WTC11 (cell line): ENCODE measurements at regions of chr15 and their contacts with region 1.

Region 1: GRCh38 chr15:75307778-75308391 is 25.2 kb downstream of the GOLGA6D start:
- DNase-seq: peak; percentile 90
- ATAC-seq: peak; percentile 100
- H3K4me3 Mint-ChIP-seq: no peak overlapping the region
- H3K27ac Mint-ChIP-seq: no peak overlapping the region
- H3K4me1 Mint-ChIP-seq: 0 out of 2 replicates have a peak, but pooled peaks cover 4% of the 10 kb centered on the region
- H3K27me3 Mint-ChIP-seq: peaks cover 20% of the 10 kb centered on the region
- CTCF ChIP-seq: peak; percentile 65

Region 2: GRCh38 chr15:74995241-74995778 is 312.6 kb before region 1 on chr15 and contains the start of gene SCAMP5:
- CTCF ChIA-PET with region 1: interaction called, 10 read pairs
- POLR2A ChIA-PET with region 1: no interaction called
- DNase-seq: peak; percentile 99
- ATAC-seq: peak; percentile 88
- H3K4me3 Mint-ChIP-seq: peak within 1 kb of the TSS; percentile 79
- H3K27ac Mint-ChIP-seq: no peak within 1 kb of the TSS
- H3K4me1 Mint-ChIP-seq: peaks cover 20% of the 10 kb centered on the region
- H3K27me3 Mint-ChIP-seq: peaks cover 22% of the 10 kb centered on the region
- CTCF ChIP-seq: no peak
- total RNA-seq, gene SCAMP5: 65.7 to 70.1 TPM (median 67.0 TPM) in 3 replicates

Region 3: DNA sequence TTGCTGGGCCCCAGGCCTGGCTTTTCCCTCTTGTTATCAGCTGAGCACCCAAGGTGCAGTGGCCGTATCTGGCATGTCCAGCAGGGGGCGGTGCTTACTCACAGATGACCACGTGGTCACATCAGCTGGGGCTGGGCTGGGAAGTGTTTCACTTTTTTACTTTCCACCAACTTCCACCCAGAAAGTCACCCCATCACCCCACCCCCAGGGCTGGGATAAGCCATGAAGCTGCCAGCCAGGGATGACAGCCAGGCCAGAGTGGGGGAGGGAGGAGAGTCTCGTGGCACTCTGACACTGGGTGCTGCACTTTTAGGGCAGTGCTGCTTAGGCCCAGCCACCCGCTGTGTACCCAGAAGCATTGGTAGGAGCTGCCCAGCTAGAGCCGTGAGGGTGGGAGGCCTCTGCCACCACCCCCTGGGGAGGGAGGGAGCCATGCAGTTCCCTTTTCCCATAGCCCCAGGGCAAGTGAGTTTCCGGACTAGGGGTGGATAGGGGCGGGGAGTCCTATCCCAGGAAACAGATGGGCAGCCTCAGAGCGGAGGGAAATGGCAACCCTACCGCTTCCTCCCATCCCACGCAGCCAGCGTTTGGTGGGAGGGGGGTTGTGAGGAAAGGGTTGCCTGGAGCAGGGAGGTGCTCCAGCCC is 278.4 kb before region 1 on chr15:
- CTCF ChIA-PET with region 1: interaction called, 25 read pairs
- POLR2A ChIA-PET with region 1: no interaction called
- DNase-seq: peak; percentile 94
- ATAC-seq: peak; percentile 84
- H3K4me3 Mint-ChIP-seq: no peak overlapping the region
- H3K27ac Mint-ChIP-seq: peak overlapping the region; percentile 90; the same call in 1 of the 2 replicates
- H3K4me1 Mint-ChIP-seq: peaks cover 52% of the 10 kb centered on the region
- H3K27me3 Mint-ChIP-seq: no peaks in the 10 kb centered on the region
- CTCF ChIP-seq: peak; percentile 94

Region 4: DNA sequence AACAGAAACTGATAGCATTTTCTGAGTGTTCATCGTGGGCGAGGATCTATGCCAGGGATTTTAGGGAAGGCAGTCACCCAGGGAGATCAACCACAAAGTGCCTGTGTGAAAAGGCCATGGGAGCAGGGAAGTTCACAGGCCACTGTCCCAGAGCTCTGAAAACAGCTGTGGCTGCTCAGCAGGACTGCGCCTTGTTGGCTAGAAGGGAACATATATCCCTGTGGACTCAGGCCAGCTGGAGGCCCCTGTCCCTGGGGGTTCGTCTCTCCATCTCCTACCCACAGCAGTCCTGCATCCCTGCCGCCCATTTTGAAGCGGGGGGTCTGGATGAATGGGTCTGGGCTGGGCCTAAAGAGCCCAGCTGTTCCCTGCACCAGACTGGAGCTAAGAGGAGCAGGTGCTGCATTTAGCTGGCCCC is 256.7 kb before region 1 on chr15:
- CTCF ChIA-PET with region 1: no interaction called
- POLR2A ChIA-PET with region 1: no interaction called
- DNase-seq: no peak
- ATAC-seq: no peak
- H3K4me3 Mint-ChIP-seq: no peak overlapping the region
- H3K27ac Mint-ChIP-seq: no peak overlapping the region
- H3K4me1 Mint-ChIP-seq: peaks cover 5% of the 10 kb centered on the region; the same call in 1 of the 2 replicates
- H3K27me3 Mint-ChIP-seq: no peaks in the 10 kb centered on the region
- CTCF ChIP-seq: no peak

Region 5: GRCh38 chr15:75201609-75202250 is 106.2 kb before region 1 on chr15 and contains the start of gene C15orf39:
- CTCF ChIA-PET with region 1: interaction called, 23 read pairs
- POLR2A ChIA-PET with region 1: no interaction called
- DNase-seq: peak; percentile 72
- ATAC-seq: peak; percentile 37
- H3K4me3 Mint-ChIP-seq: peak within 1 kb of the TSS; percentile 91
- H3K27ac Mint-ChIP-seq: peak within 1 kb of the TSS; percentile 89
- H3K4me1 Mint-ChIP-seq: peaks cover 55% of the 10 kb centered on the region
- H3K27me3 Mint-ChIP-seq: 0 out of 2 replicates have a peak, but pooled peaks cover 2% of the 10 kb centered on the region
- CTCF ChIP-seq: peak; percentile 92
- total RNA-seq, gene C15orf39: 39.9 to 52.8 TPM (median 41.6 TPM) in 3 replicates

Region 6: GRCh38 chr15:75215107-75216004 is 92.5 kb before region 1 on chr15:
- CTCF ChIA-PET with region 1: interaction called, 10 read pairs
- POLR2A ChIA-PET with region 1: interaction called, 6 read pairs
- DNase-seq: no peak
- ATAC-seq: peak; percentile 9
- H3K4me3 Mint-ChIP-seq: no peak overlapping the region
- H3K27ac Mint-ChIP-seq: no peak overlapping the region
- H3K4me1 Mint-ChIP-seq: peaks cover 25% of the 10 kb centered on the region
- H3K27me3 Mint-ChIP-seq: no peaks in the 10 kb centered on the region; the same call in 1 of the 2 replicates
- CTCF ChIP-seq: no peak